ENCODE measurements at regions of chr5 and their contacts with region 1.

Region 1: GRCh38 chr5:38420691-38421390 is 135.6 kb downstream of the LIFR start:
- DNase-seq: peak; percentile 42
- H3K4me3 Mint-ChIP-seq: no peak overlapping the region
- H3K27ac Mint-ChIP-seq: no peak overlapping the region
- H3K4me1 Mint-ChIP-seq: no peaks in the 10 kb centered on the region
- H3K27me3 Mint-ChIP-seq: peaks cover 5% of the 10 kb centered on the region

Region 2: DNA sequence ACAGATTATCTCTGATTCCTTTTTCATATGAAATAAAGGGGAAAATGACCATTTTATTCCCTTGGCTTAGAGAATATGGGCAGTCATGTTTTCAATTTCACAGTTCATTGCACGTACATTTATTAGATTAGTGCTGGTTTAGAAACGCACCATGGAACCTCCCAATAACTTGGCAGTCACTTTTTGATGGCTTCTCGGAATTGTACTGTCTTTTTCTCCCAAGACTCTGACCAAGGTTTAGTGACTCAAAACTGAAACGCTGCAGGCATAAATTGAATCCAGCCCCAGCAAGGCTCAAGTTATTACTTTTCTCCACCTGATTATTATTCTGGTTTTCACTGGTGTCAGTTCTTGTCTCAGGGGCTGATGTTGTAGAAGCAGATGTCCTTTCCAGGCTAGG is 218.1 kb before region 1 on chr5:
- CTCF ChIA-PET with region 1: no interaction called
- POLR2A ChIA-PET with region 1: no interaction called
- intact Hi-C with region 1: no loop called
- DNase-seq: no peak
- H3K4me3 Mint-ChIP-seq: no peak overlapping the region
- H3K27ac Mint-ChIP-seq: no peak overlapping the region
- H3K4me1 Mint-ChIP-seq: no peaks in the 10 kb centered on the region
- H3K27me3 Mint-ChIP-seq: no peaks in the 10 kb centered on the region

Region 3: DNA sequence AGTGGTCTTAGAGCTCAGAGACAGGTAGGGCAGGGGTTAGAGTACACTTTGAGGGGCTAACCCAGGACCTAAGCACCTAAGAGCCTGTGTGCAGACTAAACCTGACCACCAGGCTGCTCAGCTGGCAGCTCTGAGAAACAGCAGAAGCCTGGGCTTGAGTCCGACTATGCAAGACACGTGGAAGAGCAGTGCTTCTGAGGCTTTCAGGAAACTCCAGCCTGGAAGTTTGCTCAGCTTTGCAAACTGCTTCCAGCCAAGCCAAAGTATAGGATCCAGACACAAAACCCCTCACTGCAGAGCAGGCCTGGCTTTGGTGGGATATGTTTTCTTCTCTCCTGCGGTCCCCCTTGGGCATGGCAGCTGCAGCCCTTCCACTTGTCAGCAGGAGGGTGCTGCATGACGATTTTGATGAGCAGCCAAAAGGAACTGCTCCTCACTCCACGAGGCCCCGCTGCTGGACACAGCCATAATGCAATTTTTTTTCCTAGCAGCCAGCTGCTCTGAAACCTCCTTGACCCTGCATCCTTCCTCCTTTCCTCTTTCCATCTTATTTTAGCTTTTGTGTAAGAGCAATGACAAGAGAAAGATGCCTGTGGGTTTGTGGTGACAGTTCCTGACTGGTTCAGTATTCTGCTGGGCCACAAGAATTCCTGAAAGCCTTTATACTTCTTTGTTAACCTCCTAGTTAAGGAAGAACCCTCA is 12.5 kb after region 1 on chr5:
- CTCF ChIA-PET with region 1: interaction called, 16 read pairs
- POLR2A ChIA-PET with region 1: no interaction called
- intact Hi-C with region 1: no loop called
- DNase-seq: no peak
- H3K4me3 Mint-ChIP-seq: no peak overlapping the region
- H3K27ac Mint-ChIP-seq: no peak overlapping the region
- H3K4me1 Mint-ChIP-seq: no peaks in the 10 kb centered on the region
- H3K27me3 Mint-ChIP-seq: peaks cover 15% of the 10 kb centered on the region

Measured in activated CD4-positive, alpha-beta memory T cell treated with anti-CD3 and anti-CD28 coated beads for 36 hours (primary cell).